ENCODE measurements at regions of chr12 and their contacts with region 1.

Region 1: DNA sequence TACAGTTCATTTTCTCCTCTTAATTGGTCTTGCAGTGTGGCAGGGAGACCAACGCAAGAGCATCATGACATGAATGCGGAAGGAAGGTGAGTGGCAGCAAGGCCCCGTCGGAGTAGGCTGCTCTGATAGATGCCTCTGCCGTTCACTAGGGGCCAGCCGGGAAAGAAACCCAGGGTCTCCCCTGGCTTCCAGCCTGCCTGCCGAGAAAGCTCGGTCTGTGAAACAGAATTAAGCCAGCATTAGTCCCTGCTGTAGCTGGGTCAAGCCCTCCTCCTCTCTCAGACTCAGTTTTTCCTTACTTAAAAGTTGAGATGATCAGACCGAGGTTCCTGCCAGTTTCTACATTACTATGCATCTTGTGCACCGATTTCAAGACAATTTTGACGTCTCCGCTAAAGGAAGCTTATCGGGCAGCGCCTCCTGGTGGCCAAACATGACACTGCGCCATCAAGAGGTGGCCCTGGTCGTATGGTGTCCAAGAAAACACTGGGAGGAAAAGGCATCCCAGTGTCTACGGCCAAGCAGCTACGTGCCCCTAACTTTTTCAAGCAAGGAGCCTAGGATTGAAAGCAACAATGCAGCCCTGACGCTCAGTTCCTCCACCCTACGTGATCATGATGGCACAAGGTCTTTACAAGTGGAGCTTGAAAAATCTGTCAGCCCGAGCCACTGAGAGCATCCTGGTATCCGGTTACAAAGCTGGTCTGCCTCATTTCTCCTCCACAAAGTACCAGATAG is 131.6 kb downstream of the KSR2 start:
- DNase-seq: peak; percentile 86
- H3K4me3 Mint-ChIP-seq: no peak overlapping the region
- H3K27ac Mint-ChIP-seq: peak overlapping the region; percentile 42
- H3K4me1 Mint-ChIP-seq: peaks cover 8% of the 10 kb centered on the region
- H3K27me3 Mint-ChIP-seq: peaks cover 8% of the 10 kb centered on the region

Region 2: GRCh38 chr12:117236456-117237001 is 600.6 kb before region 1 on chr12:
- CTCF ChIA-PET with region 1: interaction called, 59 read pairs
- POLR2A ChIA-PET with region 1: no interaction called
- intact Hi-C with region 1: loop called (anchors 2 kb)
- DNase-seq: peak; percentile 86
- H3K4me3 Mint-ChIP-seq: no peak overlapping the region
- H3K27ac Mint-ChIP-seq: no peak overlapping the region
- H3K4me1 Mint-ChIP-seq: no peaks in the 10 kb centered on the region
- H3K27me3 Mint-ChIP-seq: peaks cover 9% of the 10 kb centered on the region

Region 3: DNA sequence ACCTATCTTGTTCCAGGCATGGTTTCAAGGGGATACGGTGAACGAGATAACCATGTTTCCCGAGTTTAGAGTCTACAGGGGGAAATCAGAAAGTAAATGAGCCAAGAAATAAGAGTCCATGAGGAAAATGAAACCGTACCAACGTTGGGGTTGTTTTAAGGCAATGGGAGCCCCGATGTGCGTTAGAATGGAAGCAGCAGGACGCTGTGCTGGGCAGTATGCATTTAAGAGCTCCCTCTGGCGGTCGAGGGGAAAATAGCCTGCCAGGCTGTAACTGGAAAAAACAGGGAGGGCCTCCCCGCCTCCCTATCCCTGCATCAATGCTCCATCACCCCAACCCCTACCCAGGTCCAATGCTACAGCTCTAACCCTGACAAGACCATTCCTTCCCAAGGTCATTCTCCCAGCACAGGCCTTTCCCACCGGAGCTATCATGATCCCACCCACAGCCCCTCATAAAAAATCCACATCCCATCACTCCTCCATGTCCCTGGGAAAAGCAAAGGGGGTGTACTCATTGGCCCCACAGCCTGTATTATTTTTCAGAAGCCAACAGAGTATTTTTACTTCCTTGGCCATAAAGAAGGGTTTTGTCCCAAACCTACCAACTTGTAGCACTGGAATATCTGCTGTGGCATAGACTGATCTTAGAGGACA is 249.4 kb before region 1 on chr12:
- CTCF ChIA-PET with region 1: interaction called, 3 read pairs
- POLR2A ChIA-PET with region 1: no interaction called
- intact Hi-C with region 1: loop called (anchors 2 kb)
- DNase-seq: peak; percentile 58
- H3K4me3 Mint-ChIP-seq: no peak overlapping the region
- H3K27ac Mint-ChIP-seq: no peak overlapping the region
- H3K4me1 Mint-ChIP-seq: no peaks in the 10 kb centered on the region
- H3K27me3 Mint-ChIP-seq: no peaks in the 10 kb centered on the region

Region 4: GRCh38 chr12:117850048-117850447 is 12.9 kb after region 1 on chr12:
- CTCF ChIA-PET with region 1: interaction called, 26 read pairs
- POLR2A ChIA-PET with region 1: no interaction called
- intact Hi-C with region 1: no loop called
- DNase-seq: peak; percentile 13
- H3K4me3 Mint-ChIP-seq: no peak overlapping the region
- H3K27ac Mint-ChIP-seq: no peak overlapping the region
- H3K4me1 Mint-ChIP-seq: no peaks in the 10 kb centered on the region
- H3K27me3 Mint-ChIP-seq: peaks cover 4% of the 10 kb centered on the region

Measured in activated CD4-positive, alpha-beta memory T cell treated with anti-CD3 and anti-CD28 coated beads for 36 hours (primary cell).